AG04449 (cell line): ENCODE measurements at regions of chr17 and their contacts with region 1.

Region 1: DNA sequence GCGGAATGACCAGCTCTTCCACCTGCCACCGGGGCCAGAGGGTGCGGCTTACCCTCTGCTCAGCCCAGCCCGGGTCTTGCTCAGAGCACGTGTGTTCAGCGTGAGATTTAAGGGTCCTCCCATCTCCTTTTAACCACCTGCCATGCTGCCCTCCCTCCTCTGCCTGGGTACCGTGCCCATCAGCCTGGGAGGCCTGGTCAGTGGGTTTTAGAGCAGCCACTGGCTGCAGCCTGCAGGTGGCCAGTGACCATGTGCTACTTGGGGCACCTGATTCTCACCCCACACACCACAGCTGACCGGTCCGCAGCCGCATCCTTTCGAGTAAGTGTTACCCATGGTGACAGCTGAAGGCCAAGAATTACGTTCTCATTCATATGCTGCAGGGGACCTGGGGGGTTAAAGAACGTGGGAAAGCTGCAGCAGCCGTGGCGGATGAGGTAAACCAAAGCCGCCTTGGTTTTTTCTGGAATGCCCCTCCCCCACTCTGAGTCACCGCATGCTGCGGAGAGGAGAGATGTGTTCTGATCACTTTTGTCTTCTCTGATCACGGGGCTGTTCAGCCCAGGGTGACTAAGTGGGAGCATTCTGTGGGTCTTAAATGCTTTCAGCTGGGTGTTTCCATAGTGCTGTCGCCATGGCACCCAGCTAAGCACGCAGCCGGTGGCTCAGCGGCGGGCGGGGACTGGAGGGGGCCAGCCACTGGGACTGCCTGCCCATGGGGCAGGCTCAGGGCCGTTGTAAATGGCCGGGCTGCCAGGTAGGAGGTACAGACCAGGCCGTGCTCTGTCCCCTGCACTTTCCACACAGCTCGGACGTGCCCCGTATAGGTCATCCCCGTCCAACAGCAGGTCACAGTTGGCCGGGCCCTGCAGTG is 59.8 kb downstream of the BAIAP2 start:
- DNase-seq: peak; percentile 98
- H3K4me3 ChIP-seq: peak overlapping the region; percentile 27
- CTCF ChIP-seq: no peak

Region 2: DNA sequence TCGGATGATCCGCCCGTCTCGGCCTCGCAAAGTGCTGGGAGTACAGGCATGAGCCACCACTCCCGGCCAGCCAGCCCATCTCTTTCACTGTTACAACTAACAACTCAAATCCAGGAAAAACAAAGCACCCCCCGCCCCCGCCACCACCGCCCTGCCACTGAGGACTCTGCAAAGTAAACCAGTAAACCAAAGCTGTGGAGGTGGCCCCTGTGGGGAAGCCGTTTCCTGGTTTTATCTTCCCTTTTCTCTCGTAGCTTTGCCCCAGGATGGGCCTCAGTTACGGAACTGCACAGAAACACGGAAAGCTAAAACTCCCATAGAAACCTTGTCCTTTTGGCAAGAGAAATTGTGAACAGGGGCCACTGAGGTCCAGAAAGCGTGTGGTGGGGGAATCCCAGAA is 85.6 kb before region 1 on chr17:
- CTCF ChIA-PET with region 1: interaction called, 21 read pairs
- POLR2A ChIA-PET with region 1: no interaction called
- DNase-seq: no peak
- H3K4me3 ChIP-seq: no peak overlapping the region
- CTCF ChIP-seq: no peak

Region 3: DNA sequence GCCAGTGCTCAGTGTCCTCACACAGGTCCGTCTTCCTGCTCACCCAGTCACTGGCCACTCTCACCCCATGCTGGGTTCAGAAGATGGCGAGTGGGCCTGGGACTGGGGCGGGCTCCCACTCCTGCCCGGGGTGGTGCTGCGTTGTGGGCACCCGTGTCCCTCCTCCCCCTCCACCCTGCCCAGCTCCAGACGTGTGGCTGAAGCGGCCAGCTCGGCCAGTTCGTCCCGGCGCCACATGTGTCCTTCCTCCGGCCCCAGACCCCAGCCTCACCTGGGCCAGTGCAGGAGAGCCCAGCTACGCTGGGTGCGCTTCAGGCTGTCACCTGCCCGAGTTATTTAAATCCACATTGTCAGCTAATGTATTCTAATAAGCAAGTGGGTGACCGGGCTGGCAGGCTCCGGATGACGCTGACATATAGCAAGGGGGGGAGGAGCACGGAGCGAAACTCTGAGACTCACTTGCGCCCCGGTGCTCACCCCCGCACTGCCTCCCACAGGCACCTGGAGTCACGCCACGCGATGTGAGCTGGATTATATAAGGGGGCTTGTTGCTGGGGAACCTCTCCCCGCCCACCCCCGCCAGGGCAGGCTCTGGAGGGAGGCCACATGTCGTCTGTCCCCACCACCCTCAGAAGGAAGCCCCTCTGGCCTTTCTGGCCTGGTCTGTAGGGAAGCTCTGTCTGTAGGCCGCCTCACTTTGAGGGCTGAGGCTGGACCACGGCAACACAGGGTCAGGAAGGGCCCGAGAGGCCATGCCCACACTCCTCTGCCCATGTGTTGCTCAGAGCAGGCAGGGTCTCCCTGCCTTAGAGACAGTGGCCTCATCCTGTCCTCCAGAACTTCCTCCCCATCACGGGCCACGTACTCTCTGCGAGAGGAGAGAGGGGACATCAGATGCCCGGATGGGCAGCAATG is 66.9 kb before region 1 on chr17:
- CTCF ChIA-PET with region 1: interaction called, 178 read pairs
- POLR2A ChIA-PET with region 1: no interaction called
- DNase-seq: no peak
- H3K4me3 ChIP-seq: no peak overlapping the region
- CTCF ChIP-seq: no peak

Region 4: DNA sequence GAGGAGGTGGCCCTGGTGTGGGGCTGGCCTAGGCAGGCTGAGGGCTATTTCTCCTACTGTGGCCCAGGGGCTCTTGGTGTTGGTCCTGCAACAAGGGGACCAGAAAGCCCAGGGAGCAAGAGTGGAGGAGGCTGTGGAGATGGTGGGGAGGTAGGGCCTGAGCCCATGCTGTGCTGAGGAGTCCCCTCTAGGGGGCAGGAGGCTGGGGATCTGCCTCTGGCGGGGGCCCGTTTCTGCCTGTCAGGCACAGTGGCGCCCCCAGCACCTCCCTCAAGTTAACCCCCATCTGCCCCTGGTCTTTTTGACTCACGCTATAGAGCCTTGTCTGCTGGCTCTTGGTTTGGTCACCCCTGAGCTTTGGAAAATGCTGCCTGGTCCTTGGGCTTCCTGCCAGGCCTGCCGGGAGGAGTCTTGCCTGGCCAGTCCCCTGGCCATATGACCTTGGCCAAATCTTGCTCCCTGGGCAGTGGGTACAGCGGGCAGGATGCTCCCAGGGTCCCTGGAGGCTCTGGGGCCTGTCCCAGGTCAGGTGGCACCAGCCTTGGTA is 53.9 kb before region 1 on chr17:
- CTCF ChIA-PET with region 1: interaction called, 18 read pairs
- POLR2A ChIA-PET with region 1: interaction called, 5 read pairs
- DNase-seq: no peak
- H3K4me3 ChIP-seq: no peak overlapping the region
- CTCF ChIP-seq: peak; percentile 53

Region 5: DNA sequence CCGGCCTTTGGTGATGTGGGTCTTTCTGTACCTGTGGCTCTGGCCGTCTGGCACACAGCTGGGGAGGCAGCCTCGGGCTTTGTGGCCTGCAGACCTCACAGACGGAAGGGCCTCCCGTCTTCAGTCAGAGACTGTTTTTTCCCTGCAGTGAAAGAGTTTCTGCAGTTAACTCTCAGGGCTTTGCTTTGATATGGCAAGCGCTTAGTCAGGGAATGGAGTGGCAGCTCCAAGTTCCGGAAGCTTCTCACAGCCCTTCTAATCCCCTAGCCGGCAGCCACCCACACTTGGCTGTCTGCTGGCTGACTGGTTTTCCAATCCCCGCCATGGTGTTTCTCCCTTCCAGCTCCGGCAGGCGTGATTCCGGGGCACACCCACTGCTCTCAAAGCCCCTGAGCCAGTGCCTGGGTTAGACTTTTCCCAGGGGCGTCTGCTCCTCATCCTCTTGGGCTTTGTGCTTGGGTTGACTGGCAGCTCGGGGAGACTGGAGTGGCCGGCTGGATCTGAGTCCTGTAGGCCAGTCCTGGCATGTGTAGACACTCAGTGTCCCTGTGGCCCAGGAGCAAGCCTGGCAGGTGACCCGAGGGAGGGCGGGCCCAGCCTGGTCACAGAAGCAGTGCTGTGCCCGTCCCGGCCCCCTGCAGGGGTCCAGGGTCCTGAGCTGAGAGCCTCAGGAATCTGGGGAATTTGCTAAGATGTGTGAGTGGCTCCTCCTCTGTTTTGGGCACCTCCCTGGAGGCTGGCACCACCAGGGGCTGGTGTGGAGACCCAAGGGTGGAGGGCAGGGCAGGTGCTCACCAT is 29.9 kb before region 1 on chr17:
- CTCF ChIA-PET with region 1: interaction called, 16 read pairs
- POLR2A ChIA-PET with region 1: interaction called, 8 read pairs
- DNase-seq: peak; percentile 36
- H3K4me3 ChIP-seq: no peak overlapping the region
- CTCF ChIP-seq: no peak

Region 6: DNA sequence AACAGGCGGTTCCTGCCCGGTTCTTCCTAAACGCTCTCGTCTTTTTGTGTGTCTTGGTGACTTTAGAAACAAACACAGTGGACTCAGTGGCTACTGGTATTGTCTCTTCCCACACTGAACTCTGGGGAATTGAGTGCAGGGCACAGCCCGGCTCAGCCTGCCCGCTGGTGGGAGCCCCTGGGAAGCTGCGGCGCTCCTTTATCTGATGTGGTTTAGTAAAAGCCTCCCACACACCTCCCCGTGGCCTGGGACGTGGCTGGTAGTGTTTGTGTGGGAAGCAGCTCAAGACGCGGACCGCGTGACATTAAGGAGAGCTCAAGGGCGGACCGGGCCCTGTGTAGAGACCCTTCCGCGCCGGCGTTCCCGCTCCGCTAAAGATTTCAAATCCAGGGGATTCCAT is 15.2 kb after region 1 on chr17:
- CTCF ChIA-PET with region 1: interaction called, 50 read pairs
- POLR2A ChIA-PET with region 1: interaction called, 5 read pairs
- DNase-seq: no peak
- H3K4me3 ChIP-seq: no peak overlapping the region
- CTCF ChIP-seq: no peak

Region 7: GRCh38 chr17:81135503-81136278 is 40.9 kb after region 1 on chr17:
- CTCF ChIA-PET with region 1: no interaction called
- POLR2A ChIA-PET with region 1: no interaction called
- DNase-seq: no peak
- H3K4me3 ChIP-seq: no peak overlapping the region
- CTCF ChIP-seq: no peak

Region 8: GRCh38 chr17:81309070-81309905 is 214.5 kb after region 1 on chr17:
- CTCF ChIA-PET with region 1: no interaction called
- POLR2A ChIA-PET with region 1: no interaction called
- DNase-seq: no peak
- H3K4me3 ChIP-seq: no peak overlapping the region
- CTCF ChIP-seq: peak; percentile 64